ENCODE measurements at regions of chr10 and their contacts with region 1.

Region 1: GRCh38 chr10:71569775-71570588 is 149.6 kb downstream of the C10orf105 start:
- DNase-seq: peak; percentile 75
- H3K4me3 ChIP-seq: no peak overlapping the region
- H3K27ac ChIP-seq: no peak overlapping the region
- H3K4me1 ChIP-seq: no peaks in the 10 kb centered on the region
- CTCF ChIP-seq: peak; percentile 90

Region 2: GRCh38 chr10:71449026-71449425 is 121.0 kb before region 1 on chr10:
- CTCF ChIA-PET with region 1: interaction called, 12 read pairs
- POLR2A ChIA-PET with region 1: no interaction called
- intact Hi-C with region 1: no loop called
- DNase-seq: no peak
- H3K4me3 ChIP-seq: no peak overlapping the region
- H3K27ac ChIP-seq: no peak overlapping the region
- H3K4me1 ChIP-seq: no peaks in the 10 kb centered on the region
- CTCF ChIP-seq: no peak

Region 3: DNA sequence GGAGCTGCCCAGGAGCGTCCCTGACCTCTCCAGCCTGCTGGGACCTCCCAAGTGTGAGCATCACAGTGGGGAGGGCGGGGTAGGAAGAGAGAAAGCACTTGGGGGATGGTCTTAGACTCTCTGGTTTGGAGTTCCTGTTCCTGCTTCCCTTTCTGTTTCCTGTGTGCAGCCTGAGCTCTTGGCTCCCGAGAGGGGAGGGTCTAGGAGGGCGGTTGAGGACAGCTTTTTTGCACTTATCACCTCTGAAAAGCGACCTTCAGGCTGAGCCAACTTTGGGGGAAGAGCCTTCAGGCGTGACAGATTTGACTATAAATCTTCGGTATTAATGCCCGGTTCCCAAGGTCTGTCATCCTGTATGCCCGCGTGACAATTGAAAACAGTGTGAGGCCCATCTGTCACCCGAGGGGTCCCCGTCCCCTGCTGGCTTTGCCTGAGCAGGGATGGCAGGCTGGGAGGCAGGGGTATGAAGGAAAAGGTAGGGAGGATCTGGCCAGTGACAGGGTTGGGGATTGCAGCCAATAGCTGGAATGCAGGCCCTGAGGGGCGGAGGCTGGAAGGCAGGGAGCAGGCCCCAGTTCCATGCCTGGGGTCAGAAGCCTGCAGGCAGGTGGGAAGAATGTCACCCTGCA is 94.6 kb before region 1 on chr10:
- CTCF ChIA-PET with region 1: no interaction called
- POLR2A ChIA-PET with region 1: no interaction called
- intact Hi-C with region 1: loop called (anchors 5 kb)
- DNase-seq: peak; percentile 55
- H3K4me3 ChIP-seq: peak overlapping the region; percentile 11
- H3K27ac ChIP-seq: no peak overlapping the region
- H3K4me1 ChIP-seq: peaks cover 16% of the 10 kb centered on the region
- CTCF ChIP-seq: no peak